CD8-positive, alpha-beta T cell (primary cell): ENCODE measurements at regions of chr14 and their contacts with region 1.

Region 1: DNA sequence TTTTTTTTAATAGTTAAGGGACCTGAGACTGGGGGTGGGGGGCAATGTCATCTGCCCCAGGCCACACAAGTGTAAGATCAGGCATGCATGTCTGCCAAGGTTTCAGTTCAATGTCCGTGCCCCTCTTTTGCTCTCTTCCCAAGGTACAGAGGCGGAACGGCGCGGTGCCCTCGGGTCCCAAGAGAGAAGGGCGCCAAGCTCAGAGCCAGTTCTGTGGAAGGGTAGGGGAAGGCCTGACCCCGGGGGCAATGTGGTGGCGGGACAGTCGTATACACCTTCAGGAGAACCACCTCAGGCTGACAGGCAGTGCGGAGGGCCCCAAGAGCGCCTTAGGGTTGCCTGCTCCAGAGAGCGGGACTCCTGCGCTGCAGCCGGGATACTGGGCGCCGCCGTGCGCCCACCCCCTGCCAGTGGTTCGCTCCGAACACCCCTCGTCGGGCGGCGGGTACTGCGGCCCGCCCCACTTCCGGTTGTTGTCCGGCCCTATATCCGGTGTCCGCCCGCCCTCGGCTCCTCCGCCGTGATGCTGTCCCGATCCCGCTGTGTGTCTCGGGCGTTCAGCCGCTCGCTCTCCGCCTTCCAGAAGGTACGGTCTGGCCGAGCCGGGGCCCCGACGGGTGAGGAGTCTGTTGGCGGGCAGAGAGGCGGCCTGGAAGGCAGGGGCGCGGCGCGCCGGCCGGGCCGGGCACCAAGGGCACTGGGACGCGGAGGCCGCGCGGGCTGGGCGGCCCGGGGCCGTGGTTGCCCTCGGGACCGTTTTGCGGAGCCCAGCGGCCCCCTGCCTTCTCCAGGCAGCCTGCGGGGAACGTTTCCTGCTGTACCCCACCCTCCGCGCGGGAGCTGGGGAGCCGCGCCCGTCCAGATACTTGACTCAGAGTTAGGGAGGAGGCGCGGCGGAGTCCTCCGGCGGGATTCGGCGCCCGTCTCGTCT is at the start of gene DLST:
- DNase-seq: peak; percentile 74 to 92 (median 85)
- ATAC-seq: peak; percentile 76
- H3K4me3 ChIP-seq: peak within 1 kb of the TSS; percentile 62 to 80
- H3K4me3 Mint-ChIP-seq: peak within 1 kb of the TSS; percentile 99
- H3K27ac ChIP-seq: peak within 1 kb of the TSS; percentile 82 to 90
- H3K27ac Mint-ChIP-seq: peak within 1 kb of the TSS; percentile 100
- H3K4me1 ChIP-seq: peaks cover 44% of the 10 kb centered on the region
- H3K4me1 Mint-ChIP-seq: peaks cover 62% of the 10 kb centered on the region
- H3K27me3 ChIP-seq: no peaks in the 10 kb centered on the region
- H3K27me3 Mint-ChIP-seq: no peaks in the 10 kb centered on the region
- CTCF ChIP-seq: no peak
- total RNA-seq, gene DLST: 142 to 156 TPM

Region 2: GRCh38 chr14:74712499-74713394 is 168.9 kb before region 1 on chr14 and contains the starts of genes AREL1 and FCF1:
- CTCF ChIA-PET with region 1: no interaction called
- POLR2A ChIA-PET with region 1: no interaction called
- intact Hi-C with region 1: loop called (anchors 2 to 5 kb)
- DNase-seq: peak; percentile 56 to 94 (median 80)
- ATAC-seq: peak; percentile 93
- H3K4me3 ChIP-seq: peak within 1 kb of the TSS; percentile 63 to 87
- H3K4me3 Mint-ChIP-seq: peak within 1 kb of the TSS; percentile 98
- H3K27ac ChIP-seq: peak within 1 kb of the TSS; percentile 78 to 93
- H3K27ac Mint-ChIP-seq: peak within 1 kb of the TSS; percentile 99
- H3K4me1 ChIP-seq: peaks cover 24% of the 10 kb centered on the region
- H3K4me1 Mint-ChIP-seq: peaks cover 65% of the 10 kb centered on the region
- H3K27me3 ChIP-seq: no peaks in the 10 kb centered on the region
- H3K27me3 Mint-ChIP-seq: no peaks in the 10 kb centered on the region
- CTCF ChIP-seq: no peak
- total RNA-seq, gene AREL1: 44.5 to 60.1 TPM
- total RNA-seq, gene FCF1: 32.6 to 34.0 TPM

Region 3: DNA sequence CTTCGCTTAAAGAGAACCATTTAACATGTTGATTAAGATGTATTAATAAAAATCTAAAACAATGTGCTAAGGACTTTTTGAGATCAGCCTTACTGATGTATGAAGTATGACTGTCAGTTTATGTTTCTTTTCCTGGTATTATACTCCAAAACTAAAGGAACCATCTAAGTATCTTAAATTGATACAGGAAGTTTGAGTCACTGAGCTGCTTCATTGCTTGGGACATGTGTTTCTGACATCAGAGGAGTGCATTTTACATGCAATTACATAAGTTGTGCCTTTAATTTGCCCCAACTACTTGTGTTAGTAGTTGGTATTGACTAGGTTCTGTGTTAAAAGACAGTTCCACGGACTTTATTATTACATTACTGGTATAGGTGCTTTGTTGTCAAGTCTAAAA is 56.7 kb before region 1 on chr14:
- CTCF ChIA-PET with region 1: no interaction called
- POLR2A ChIA-PET with region 1: no interaction called
- intact Hi-C with region 1: no loop called
- DNase-seq: no peak
- ATAC-seq: no peak
- H3K4me3 ChIP-seq: no peak overlapping the region
- H3K4me3 Mint-ChIP-seq: no peak overlapping the region
- H3K27ac ChIP-seq: no peak overlapping the region
- H3K27ac Mint-ChIP-seq: no peak overlapping the region
- H3K4me1 ChIP-seq: no peaks in the 10 kb centered on the region
- H3K4me1 Mint-ChIP-seq: peaks cover 3% of the 10 kb centered on the region
- H3K27me3 ChIP-seq: no peaks in the 10 kb centered on the region
- H3K27me3 Mint-ChIP-seq: no peaks in the 10 kb centered on the region
- CTCF ChIP-seq: no peak

Region 4: DNA sequence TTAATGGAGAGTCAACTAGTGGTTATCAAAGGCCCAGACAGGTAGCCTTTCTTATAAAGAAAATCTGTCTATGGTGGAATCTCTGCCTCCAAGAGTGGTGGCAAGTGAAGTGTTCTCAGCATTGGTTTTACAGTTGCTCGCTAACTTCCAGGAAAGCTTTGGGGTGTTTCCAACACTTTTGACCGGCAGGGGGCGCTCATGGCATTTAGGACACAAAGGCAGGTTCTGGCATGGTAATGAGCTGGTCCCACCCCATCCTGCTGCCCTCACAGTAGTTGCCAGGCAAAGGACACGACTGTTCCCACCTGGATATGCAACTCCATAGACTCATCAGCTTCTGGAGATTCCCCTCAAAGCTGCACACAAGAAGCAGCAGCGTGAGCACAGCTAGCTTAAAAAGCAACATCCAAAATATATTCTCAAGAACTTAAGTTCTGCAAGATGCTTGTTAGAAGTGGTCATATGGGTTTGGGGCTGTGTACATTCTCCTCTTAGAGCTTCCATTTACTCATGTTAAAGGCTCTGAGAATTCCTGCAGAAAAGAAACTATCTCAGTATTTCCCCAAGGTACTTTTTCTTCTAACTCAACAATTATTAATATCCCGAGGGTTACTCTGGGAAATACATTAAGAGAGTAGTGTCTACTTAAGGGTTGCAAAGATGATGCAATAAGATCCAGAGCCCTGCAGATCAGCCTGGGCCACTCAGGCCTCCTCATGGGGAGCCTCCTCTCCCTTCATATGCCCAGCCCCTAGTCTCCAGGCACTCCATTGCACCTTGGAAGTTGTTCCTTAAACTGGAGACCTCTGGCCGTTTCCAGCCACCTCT is 20.6 kb before region 1 on chr14:
- CTCF ChIA-PET with region 1: interaction called, 109 read pairs
- POLR2A ChIA-PET with region 1: interaction called, 24 read pairs
- intact Hi-C with region 1: loop called in 1 of 2 experiments (anchors 1 kb)
- DNase-seq: peak; percentile 85 to 99 (median 90)
- ATAC-seq: peak; percentile 84
- H3K4me3 ChIP-seq: no peak overlapping the region
- H3K4me3 Mint-ChIP-seq: no peak overlapping the region
- H3K27ac ChIP-seq: no peak overlapping the region
- H3K27ac Mint-ChIP-seq: no peak overlapping the region
- H3K4me1 ChIP-seq: peaks cover 4% of the 10 kb centered on the region
- H3K4me1 Mint-ChIP-seq: peaks cover 7% of the 10 kb centered on the region
- H3K27me3 ChIP-seq: no peaks in the 10 kb centered on the region
- H3K27me3 Mint-ChIP-seq: no peaks in the 10 kb centered on the region
- CTCF ChIP-seq: peak; percentile 85

Region 5: GRCh38 chr14:74867673-74868072 is 14.0 kb before region 1 on chr14:
- CTCF ChIA-PET with region 1: interaction called, 109 read pairs
- POLR2A ChIA-PET with region 1: interaction called, 18 read pairs
- intact Hi-C with region 1: no loop called
- DNase-seq: peak in 8 of 9 experiments; percentile 43 to 72 (median 57)
- ATAC-seq: peak; percentile 81
- H3K4me3 ChIP-seq: no peak overlapping the region
- H3K4me3 Mint-ChIP-seq: peak overlapping the region; percentile 48
- H3K27ac ChIP-seq: peak overlapping the region in 1 of 2 experiments; percentile 60
- H3K27ac Mint-ChIP-seq: peak overlapping the region; percentile 82
- H3K4me1 ChIP-seq: peaks cover 25% of the 10 kb centered on the region
- H3K4me1 Mint-ChIP-seq: peaks cover 26% of the 10 kb centered on the region
- H3K27me3 ChIP-seq: no peaks in the 10 kb centered on the region
- H3K27me3 Mint-ChIP-seq: no peaks in the 10 kb centered on the region
- CTCF ChIP-seq: no peak